Activated CD4-positive, alpha-beta memory T cell treated with anti-CD3 and anti-CD28 coated beads, Interleukin-2, amount 10 ng/mL, durations not matched to agents 7 days and 5 days (primary cell): ENCODE measurements at regions of chr2 and their contacts with region 1.

Region 1: GRCh38 chr2:118882709-118883210 is 35.3 kb upstream of the EN1 start:
- DNase-seq: peak; percentile 52
- H3K4me3 Mint-ChIP-seq: no peak overlapping the region
- H3K27ac Mint-ChIP-seq: no peak overlapping the region
- H3K4me1 Mint-ChIP-seq: peaks cover 4% of the 10 kb centered on the region
- H3K27me3 Mint-ChIP-seq: peaks cover 1% of the 10 kb centered on the region

Region 2: DNA sequence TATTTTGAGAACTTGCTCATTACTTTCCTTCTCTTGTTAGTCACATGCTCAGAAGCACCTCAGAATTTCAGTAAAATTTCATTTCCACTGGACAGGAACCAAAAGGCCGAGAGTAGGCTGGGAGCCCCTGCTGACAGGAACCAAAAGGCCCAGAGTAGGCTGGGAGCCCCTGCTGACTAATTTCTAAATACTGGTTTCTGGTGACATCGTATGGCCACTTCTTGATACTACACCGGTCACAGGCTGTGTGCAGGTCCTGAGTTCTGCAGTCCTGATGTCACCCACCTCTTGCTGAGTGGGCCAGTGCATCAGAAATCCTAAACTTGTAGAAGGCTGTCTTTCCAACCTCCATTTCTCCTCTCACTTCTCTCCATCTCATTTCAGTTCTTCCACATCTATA is 17.7 kb before region 1 on chr2:
- CTCF ChIA-PET with region 1: interaction called, 32 read pairs
- POLR2A ChIA-PET with region 1: no interaction called
- DNase-seq: no peak
- H3K4me3 Mint-ChIP-seq: no peak overlapping the region
- H3K27ac Mint-ChIP-seq: no peak overlapping the region
- H3K4me1 Mint-ChIP-seq: no peaks in the 10 kb centered on the region
- H3K27me3 Mint-ChIP-seq: peaks cover 29% of the 10 kb centered on the region

Region 3: DNA sequence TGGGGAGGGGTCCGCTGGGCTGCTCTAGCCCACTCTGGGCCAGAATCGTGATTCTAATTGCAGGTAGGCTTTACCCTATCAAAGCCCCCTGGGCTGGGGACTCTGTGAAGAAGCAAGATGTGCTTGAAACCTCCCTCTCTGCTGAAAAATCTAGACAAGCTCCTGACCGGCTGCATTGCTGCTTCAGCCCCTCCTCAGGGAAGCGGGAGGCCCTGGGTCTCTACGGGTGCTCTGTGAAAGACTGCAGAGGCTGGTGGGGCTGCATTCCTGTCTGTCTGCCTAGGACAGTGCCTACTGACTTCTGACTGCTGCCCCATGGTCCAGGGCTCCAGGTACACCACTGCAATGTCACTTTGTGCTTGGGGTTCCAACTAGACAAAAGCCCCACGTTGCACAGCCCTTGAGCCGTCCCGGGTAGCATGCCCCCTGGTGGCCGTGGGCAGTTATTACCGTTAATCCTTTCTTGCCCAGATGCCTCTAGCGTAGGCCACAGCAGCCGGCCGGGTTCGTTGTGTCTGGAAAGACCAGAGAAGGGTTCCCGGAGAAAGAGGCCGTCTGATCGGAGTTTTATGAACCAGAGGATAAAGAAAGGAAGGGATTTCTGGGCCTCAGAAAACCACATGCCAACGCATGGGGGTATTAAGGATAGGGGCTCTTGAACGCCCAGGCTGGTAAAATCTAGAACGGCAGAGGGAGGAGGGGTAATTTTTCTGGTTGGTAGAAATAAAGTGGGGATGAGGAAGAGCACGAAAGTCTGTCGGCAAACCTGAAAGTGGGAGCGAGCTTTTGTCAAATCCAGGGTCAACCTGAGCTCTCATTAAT is 291.7 kb after region 1 on chr2:
- CTCF ChIA-PET with region 1: interaction called, 31 read pairs
- POLR2A ChIA-PET with region 1: no interaction called
- DNase-seq: peak; percentile 39
- H3K4me3 Mint-ChIP-seq: no peak overlapping the region
- H3K27ac Mint-ChIP-seq: no peak overlapping the region
- H3K4me1 Mint-ChIP-seq: no peaks in the 10 kb centered on the region
- H3K27me3 Mint-ChIP-seq: no peaks in the 10 kb centered on the region